GM12878 (cell line): ENCODE measurements at regions of chr9 and their contacts with region 1.

Region 1: DNA sequence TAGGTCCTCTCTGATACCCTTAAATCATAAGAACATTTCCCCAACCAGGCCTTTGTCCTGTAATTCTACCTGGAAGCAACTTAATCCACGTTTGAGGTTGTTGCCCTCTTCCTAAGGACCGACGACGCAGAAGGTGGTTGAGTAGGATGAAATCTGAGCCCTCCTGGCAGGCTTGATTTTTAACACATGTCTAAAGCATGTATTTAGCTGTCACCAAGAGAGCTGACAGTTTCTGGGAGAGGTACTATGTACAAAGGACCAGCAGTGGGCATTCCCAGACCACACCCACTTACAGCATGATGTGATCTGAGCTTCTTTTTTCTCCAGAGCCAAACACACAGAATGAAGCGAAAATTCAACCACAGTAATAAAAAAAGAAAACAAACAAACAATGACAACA is 260.9 kb downstream of the SH3GL2 start:
- DNase-seq: no peak
- ATAC-seq: no peak
- H3K4me3 ChIP-seq: no peak overlapping the region
- H3K27ac ChIP-seq: no peak overlapping the region
- H3K4me1 ChIP-seq: no peaks in the 10 kb centered on the region
- H3K27me3 ChIP-seq: no peaks in the 10 kb centered on the region
- CTCF ChIP-seq: no peak
- EP300 ChIP-seq: no peak
- POLR2A ChIP-seq: no peak
- RAD21 ChIP-seq: no peak

Region 2: DNA sequence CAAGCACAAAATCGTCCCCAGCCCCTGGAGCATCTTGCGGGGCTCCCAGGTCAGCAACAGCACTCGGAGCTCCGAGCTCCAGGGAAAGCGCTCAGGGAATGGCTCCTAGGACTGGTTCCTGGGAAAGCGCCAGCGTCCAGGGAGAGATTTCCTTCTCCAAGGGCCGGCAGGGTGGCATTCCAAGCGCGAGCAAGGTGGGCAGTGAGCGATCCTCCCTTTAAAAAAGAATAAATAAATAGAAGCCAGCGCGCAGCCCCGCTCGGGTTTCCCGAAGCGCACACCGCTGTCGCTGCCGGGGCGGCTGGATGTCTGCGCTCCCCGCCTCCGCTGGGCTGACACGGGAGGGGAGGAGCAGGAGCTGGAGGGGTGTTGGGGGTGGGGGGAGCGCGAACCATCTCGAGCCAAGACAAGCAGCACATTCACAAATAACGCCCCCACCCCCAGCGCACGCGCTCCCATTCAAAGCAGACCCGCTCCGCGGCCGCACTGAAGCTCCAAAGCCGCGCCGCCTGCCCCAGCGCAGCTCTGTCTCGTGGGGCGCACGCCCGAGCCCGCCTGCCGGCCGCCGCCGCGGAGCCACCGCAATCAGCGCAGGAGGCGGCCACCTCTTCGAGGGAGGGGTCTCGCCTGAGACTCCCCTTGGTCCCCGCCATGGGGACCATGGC is 66.5 kb after region 1 on chr9:
- CTCF ChIA-PET with region 1: no interaction called
- POLR2A ChIA-PET with region 1: no interaction called
- RAD21 ChIA-PET with region 1: no interaction called
- SMC1A ChIA-PET with region 1: interaction called, 4 read pairs
- in situ Hi-C with region 1: loop called (anchors 10 kb)
- intact Hi-C with region 1: no loop called
- DNase-seq: no peak
- ATAC-seq: no peak
- H3K4me3 ChIP-seq: no peak overlapping the region
- H3K27ac ChIP-seq: no peak overlapping the region
- H3K4me1 ChIP-seq: no peaks in the 10 kb centered on the region
- H3K27me3 ChIP-seq: peaks cover 2 to 7% of the 10 kb centered on the region in 2 experiments
- CTCF ChIP-seq: no peak
- EP300 ChIP-seq: no peak
- POLR2A ChIP-seq: no peak
- RAD21 ChIP-seq: no peak